ENCODE measurements at regions of chr6 and their contacts with region 1.

Region 1: GRCh38 chr6:168050881-168051586 is 28.0 kb downstream of the FRMD1 start:
- DNase-seq: no peak

Region 2: GRCh38 chr6:167907837-167908681 is 143.0 kb before region 1 on chr6:
- intact Hi-C with region 1: loop called (anchors 5 kb)
- DNase-seq: no peak

Region 3: GRCh38 chr6:167925026-167925425 is 126.0 kb before region 1 on chr6:
- intact Hi-C with region 1: loop called (anchors 5 kb)
- DNase-seq: no peak

Region 4: GRCh38 chr6:168107212-168107983 is 56.4 kb after region 1 on chr6:
- intact Hi-C with region 1: no loop called
- DNase-seq: no peak